ENCODE measurements at regions of chr10 and their contacts with region 1.

Region 1: DNA sequence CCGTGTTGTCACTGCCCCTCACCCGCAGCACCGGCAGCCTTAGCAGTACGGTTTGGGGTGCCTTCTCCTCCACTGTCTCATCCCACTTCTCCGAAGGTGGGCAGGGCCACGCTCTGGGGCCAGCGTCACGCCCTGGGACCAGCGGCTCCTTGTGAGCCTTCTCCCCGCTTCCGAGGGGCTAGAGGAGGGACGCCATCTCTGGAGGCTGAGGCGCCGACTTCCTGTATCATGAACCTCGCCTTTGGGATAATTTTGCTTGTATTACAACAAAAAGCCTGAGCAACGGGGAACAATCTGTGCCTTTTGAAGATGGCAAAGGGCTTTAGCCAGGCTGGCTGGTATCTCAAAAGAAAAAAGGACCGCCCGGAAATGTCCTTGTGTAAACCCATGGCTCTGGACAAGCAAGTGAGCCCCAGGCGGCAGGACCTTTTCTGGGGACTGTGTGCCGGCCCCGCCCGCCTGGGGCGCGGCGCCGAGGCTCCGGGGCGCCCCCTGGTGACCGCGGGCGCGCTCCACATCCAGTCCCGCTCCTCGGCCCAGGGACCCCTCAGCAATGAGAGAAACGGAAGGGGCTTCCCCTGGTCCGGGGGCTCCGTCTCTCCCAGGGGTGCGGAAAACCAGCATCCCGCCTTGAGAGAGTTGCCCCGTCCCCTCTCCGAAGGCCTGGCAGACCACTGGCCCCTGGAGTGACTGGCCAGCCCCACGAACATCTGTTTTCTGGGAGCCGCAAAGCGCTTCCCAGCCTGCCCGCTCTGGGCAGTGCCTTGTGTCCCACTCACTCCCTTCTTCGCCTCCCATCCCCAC is 3.8 kb downstream of the DEPP1 start:
- DNase-seq: peak; percentile 36 to 83 (median 56)
- ATAC-seq: peak; percentile 98
- H3K4me3 ChIP-seq: peak overlapping the region; percentile 44 to 48
- H3K4me3 Mint-ChIP-seq: peak overlapping the region; percentile 70
- H3K27ac ChIP-seq: peak overlapping the region in 1 of 2 experiments; percentile 44
- H3K27ac Mint-ChIP-seq: peak overlapping the region; percentile 27
- H3K4me1 ChIP-seq: peaks cover 20% of the 10 kb centered on the region
- H3K4me1 Mint-ChIP-seq: peaks cover 8% of the 10 kb centered on the region
- H3K27me3 ChIP-seq: no peaks in the 10 kb centered on the region
- H3K27me3 Mint-ChIP-seq: no peaks in the 10 kb centered on the region
- CTCF ChIP-seq: peak; percentile 90

Region 2: DNA sequence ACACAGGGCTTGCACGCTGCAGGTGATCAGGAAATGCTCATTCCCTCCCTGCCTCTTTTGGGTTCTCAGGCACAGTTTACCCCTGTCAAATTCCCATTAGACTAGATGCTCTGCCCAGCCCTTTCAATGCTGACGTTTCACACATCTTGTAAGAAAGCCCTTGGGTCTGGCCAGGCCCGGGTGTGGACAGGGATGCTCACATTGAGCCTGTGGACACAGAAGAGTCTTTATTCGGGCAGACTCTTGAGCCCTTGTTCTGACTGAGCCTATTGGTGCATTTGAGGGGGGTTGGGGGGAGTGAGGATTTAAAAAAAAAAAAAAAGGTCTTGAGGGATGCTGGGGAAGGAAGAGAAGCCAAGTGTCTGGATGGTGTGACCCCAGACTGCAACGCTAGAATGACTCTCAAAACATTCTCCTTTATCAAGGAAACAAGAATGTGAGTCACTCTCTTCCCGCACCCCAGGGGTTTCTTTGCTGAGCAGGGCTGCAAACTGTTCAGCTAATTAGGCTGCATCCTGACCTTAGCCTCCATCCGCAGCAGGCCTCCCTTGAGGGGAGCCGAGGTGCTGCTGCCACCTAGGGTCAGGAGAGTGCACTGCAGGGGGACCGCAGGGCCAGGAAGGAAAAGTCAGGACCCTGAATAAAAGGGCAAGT is 117.3 kb before region 1 on chr10:
- CTCF ChIA-PET with region 1: no interaction called
- POLR2A ChIA-PET with region 1: no interaction called
- intact Hi-C with region 1: loop called in 1 of 2 experiments (anchors 5 kb)
- DNase-seq: peak in 8 of 9 experiments; percentile 33 to 69 (median 58)
- ATAC-seq: peak; percentile 84
- H3K4me3 ChIP-seq: no peak overlapping the region
- H3K4me3 Mint-ChIP-seq: no peak overlapping the region
- H3K27ac ChIP-seq: no peak overlapping the region
- H3K27ac Mint-ChIP-seq: no peak overlapping the region
- H3K4me1 ChIP-seq: no peaks in the 10 kb centered on the region
- H3K4me1 Mint-ChIP-seq: no peaks in the 10 kb centered on the region
- H3K27me3 ChIP-seq: no peaks in the 10 kb centered on the region
- H3K27me3 Mint-ChIP-seq: peaks cover 4% of the 10 kb centered on the region
- CTCF ChIP-seq: peak; percentile 93

Region 3: GRCh38 chr10:44864637-44865288 is 110.1 kb before region 1 on chr10:
- CTCF ChIA-PET with region 1: interaction called, 3 read pairs
- POLR2A ChIA-PET with region 1: no interaction called
- intact Hi-C with region 1: loop called (anchors 5 kb)
- DNase-seq: peak; percentile 62 to 90 (median 79)
- ATAC-seq: peak; percentile 76
- H3K4me3 ChIP-seq: peak overlapping the region; percentile 64 to 78
- H3K4me3 Mint-ChIP-seq: peak overlapping the region; percentile 90
- H3K27ac ChIP-seq: no peak overlapping the region
- H3K27ac Mint-ChIP-seq: peak overlapping the region; percentile 12
- H3K4me1 ChIP-seq: peaks cover 14% of the 10 kb centered on the region
- H3K4me1 Mint-ChIP-seq: peaks cover 19% of the 10 kb centered on the region
- H3K27me3 ChIP-seq: peaks cover 2 to 6% of the 10 kb centered on the region in 2 experiments
- H3K27me3 Mint-ChIP-seq: peaks cover 51% of the 10 kb centered on the region
- CTCF ChIP-seq: peak; percentile 88

Region 4: DNA sequence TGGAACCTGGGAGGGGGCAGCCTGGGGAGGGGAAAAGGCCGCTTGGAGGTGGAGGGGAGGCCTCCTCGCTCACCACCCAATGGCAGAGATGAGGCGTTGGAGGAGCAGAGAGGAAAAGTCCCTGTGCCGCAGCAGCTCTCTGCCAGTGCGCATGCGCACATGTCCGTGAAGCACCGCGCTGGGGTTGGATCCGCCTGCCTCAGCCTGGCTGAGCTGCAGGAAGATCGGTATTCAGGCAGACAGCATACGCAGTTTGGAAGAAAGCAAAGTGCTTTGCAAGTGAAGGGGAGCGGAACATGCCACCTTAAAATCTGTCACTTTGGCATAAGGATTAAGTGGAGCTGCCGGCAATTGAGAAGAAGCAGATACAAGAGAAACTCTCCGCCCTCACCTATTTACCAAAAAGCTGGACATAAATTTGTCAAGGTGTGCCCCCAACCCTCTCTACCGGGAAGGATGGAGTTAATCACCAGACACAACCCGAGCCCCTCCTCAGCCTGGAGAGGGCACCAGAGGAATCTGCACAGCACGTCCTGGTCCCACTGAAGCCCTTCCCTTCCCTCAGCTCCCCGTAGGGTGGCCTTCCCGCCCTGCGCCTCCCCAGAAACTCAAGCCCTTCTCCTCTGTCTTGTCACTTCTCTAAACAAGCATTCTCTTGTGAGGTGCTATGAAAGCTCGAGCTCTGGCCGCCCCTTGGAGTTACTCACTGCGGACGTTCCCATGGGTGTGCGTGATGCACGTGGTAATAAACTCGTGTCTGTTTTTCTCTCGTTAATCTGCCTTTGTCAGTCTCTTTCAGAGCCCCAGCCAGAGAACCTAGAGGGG is 95.9 kb before region 1 on chr10:
- CTCF ChIA-PET with region 1: no interaction called
- POLR2A ChIA-PET with region 1: no interaction called
- intact Hi-C with region 1: loop called in 1 of 2 experiments (anchors 1 kb)
- DNase-seq: peak; percentile 48 to 87 (median 75)
- ATAC-seq: peak; percentile 90
- H3K4me3 ChIP-seq: peak overlapping the region; percentile 49 to 66
- H3K4me3 Mint-ChIP-seq: peak overlapping the region; percentile 90
- H3K27ac ChIP-seq: no peak overlapping the region
- H3K27ac Mint-ChIP-seq: peak overlapping the region; percentile 71
- H3K4me1 ChIP-seq: peaks cover 6% of the 10 kb centered on the region
- H3K4me1 Mint-ChIP-seq: peaks cover 8% of the 10 kb centered on the region
- H3K27me3 ChIP-seq: no peaks in the 10 kb centered on the region
- H3K27me3 Mint-ChIP-seq: peaks cover 28% of the 10 kb centered on the region
- CTCF ChIP-seq: no peak

Region 5: DNA sequence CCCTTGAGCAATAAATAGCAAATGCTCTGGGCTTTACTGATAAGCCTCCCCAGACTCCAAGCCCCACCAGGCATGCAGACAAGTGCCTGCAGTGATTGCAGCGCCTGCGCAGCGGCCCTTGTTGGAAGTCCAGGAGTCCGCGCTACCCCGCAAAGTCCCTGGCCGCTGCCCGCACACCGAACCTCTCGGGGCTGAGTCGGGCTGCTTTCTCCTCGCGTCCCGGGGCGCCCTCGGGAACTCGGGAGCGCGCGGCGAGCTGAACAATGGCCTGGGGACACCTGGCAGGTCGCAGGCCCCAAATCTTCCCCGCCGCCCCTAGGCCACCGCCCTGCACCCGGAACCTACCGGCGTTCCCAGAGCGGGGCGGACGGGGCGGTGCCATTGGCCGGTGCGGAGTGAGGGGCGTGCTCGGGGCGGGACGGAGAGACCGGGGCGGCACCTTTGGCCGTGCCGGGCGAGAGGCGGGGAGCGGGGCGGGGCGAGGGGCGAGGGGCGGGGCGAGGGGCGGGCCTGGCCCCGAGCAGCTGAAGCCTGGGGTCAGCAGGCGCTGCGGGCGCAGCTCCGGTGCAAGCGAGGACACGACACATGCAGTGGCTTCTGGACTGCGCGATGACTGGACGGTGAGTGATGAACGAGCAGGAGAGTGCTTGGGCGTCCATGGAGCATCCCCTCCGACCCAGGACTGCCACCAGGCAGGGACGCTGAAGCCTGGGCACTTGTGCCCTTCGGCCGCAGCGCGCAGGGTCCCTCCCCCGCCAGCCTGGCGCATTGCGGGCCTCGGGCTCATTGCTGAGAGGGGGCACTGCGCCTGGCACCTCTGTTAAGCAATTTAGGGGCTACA is 15.4 kb before region 1 on chr10 and contains the start of gene RASSF4:
- CTCF ChIA-PET with region 1: interaction called, 3 read pairs
- POLR2A ChIA-PET with region 1: interaction called, 3 read pairs
- intact Hi-C with region 1: loop called (anchors 1 kb)
- DNase-seq: peak; percentile 84 to 95 (median 92)
- ATAC-seq: peak; percentile 99
- H3K4me3 ChIP-seq: peak within 1 kb of the TSS; percentile 79 to 81
- H3K4me3 Mint-ChIP-seq: peak within 1 kb of the TSS; percentile 88
- H3K27ac ChIP-seq: peak within 1 kb of the TSS; percentile 49 to 67
- H3K27ac Mint-ChIP-seq: peak within 1 kb of the TSS; percentile 57
- H3K4me1 ChIP-seq: peaks cover 19% of the 10 kb centered on the region
- H3K4me1 Mint-ChIP-seq: peaks cover 32% of the 10 kb centered on the region
- H3K27me3 ChIP-seq: no peaks in the 10 kb centered on the region
- H3K27me3 Mint-ChIP-seq: no peaks in the 10 kb centered on the region
- CTCF ChIP-seq: no peak
- total RNA-seq, gene RASSF4: 0.30 to 0.31 TPM

Region 6: DNA sequence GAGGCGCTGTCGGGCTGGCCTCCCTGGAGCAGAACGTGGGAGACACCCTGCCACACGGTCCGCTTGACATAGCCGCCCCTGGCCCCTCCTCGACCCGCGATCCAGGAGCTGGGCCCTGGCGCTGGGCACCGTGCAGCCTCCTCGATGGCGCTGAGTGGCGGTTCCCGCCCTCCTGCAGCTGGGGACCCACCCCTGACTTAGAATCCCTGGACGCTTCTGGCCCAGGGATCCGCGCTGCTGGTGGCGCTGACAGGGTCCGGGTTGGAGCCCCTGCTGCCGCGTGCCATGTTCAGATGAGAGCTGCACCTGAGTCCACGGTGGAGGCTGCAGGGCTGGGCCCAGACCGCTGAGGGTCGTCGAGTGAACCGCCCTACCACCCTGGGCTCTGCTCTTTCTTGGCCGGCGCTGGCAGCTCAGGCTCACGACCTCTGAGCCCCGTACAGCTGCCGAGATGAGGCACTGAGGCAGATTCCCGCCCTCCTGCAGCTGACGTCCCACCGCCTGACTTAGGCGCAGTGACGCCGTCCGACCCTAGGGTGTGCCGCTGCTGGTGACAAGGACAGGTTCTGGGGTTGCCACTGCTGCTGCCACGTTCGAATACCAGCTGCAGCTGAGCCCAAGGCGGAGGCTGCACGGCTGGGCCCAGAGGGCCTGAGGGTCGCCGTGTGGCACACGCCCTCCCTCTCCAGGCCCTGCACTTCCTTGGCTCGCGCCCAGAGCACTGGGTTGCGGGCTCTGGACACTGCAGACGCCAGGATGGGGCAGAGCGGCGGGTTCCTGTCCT is 224.0 kb after region 1 on chr10:
- CTCF ChIA-PET with region 1: no interaction called
- POLR2A ChIA-PET with region 1: no interaction called
- intact Hi-C with region 1: no loop called
- DNase-seq: no peak
- ATAC-seq: no peak
- H3K4me3 ChIP-seq: no peak overlapping the region
- H3K4me3 Mint-ChIP-seq: no peak overlapping the region
- H3K27ac ChIP-seq: no peak overlapping the region
- H3K27ac Mint-ChIP-seq: no peak overlapping the region
- H3K4me1 ChIP-seq: no peaks in the 10 kb centered on the region
- H3K4me1 Mint-ChIP-seq: no peaks in the 10 kb centered on the region
- H3K27me3 ChIP-seq: no peaks in the 10 kb centered on the region
- H3K27me3 Mint-ChIP-seq: peaks cover 6% of the 10 kb centered on the region
- CTCF ChIP-seq: no peak